Gastrocnemius medialis (tissue), 4 donors: ENCODE measurements at regions of chr10 and their contacts with region 1.

Region 1: DNA sequence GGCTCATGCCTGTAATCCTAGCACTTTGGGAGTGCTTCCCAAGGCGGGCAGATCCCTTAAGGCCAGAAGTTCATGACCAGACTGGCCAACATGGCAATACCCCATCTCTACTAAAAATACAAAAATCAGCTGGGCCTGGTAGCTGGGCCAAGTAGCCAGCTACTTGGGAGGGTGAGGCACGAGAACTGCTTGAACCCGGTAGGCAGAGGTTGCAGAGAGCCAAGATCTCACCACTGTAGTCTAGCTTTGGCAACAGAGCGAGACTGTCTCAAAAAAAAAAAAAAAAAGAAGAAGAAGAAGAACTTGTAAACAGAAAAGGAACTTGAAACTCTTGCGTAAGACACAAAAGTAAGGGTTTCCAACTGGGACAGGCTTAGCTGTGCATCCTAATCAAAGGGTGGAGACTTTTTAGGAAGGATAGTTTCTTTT is 5.6 kb upstream of the IFIT2 start:
- DNase-seq: peak; percentile 85 to 91
- ATAC-seq: peak; percentile 90 to 93
- H3K4me3 ChIP-seq: peak overlapping the region in 1 of 4 donors; percentile 6
- H3K27ac ChIP-seq: peak overlapping the region; percentile 83 to 92 (median 87)
- H3K4me1 ChIP-seq: peaks cover 28 to 35% of the 10 kb centered on the region in 2 donors
- H3K27me3 ChIP-seq: no peaks in the 10 kb centered on the region
- CTCF ChIP-seq: no peak
- POLR2A ChIP-seq: no peak

Region 2: DNA sequence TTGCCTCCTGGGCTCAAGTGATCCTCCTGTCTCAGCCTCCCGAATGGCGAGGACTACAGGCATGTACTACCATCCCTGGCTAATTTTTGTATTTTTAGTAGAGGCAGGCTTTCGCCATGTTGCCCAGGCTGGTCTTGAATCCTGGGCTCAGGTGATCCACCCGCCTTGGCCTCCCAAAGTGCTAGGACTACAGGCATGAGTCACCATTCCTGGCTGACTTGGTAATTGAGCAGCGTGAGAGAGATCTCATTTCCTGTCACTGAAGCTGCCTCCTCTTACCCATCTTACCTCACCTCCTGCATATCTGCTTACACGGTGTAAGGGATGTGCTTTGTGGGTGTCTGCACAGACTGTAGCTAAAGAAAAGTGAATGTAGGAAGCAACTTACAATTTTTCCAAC is 41.2 kb after region 1 on chr10:
- in situ Hi-C with region 1: no loop called
- intact Hi-C with region 1: loop called (anchors 5 kb)
- DNase-seq: peak; percentile 35 to 67
- ATAC-seq: peak; percentile 96
- H3K4me3 ChIP-seq: no peak overlapping the region
- H3K27ac ChIP-seq: peak overlapping the region in 3 of 4 donors; percentile 2 to 45 (median 28)
- H3K4me1 ChIP-seq: peaks cover 16 to 25% of the 10 kb centered on the region in 2 donors
- H3K27me3 ChIP-seq: no peaks in the 10 kb centered on the region
- CTCF ChIP-seq: no peak
- POLR2A ChIP-seq: no peak

Region 3: GRCh38 chr10:89369156-89370105 is 73.2 kb after region 1 on chr10:
- in situ Hi-C with region 1: no loop called
- intact Hi-C with region 1: loop called (anchors 1 kb)
- DNase-seq: no peak
- ATAC-seq: no peak
- H3K4me3 ChIP-seq: no peak overlapping the region
- H3K27ac ChIP-seq: no peak overlapping the region
- H3K4me1 ChIP-seq: peaks cover 11 to 16% of the 10 kb centered on the region in 2 donors
- H3K27me3 ChIP-seq: no peaks in the 10 kb centered on the region
- CTCF ChIP-seq: peak in 4 of 5 experiments; percentile 7 to 46 (median 28)
- POLR2A ChIP-seq: no peak

Region 4: GRCh38 chr10:89391917-89392756 is 95.9 kb after region 1 on chr10 and contains the start of gene IFIT1:
- in situ Hi-C with region 1: loop called in 1 of 4 experiments (anchors 25 kb)
- intact Hi-C with region 1: loop called (anchors 2 kb)
- DNase-seq: peak; percentile 57 to 65
- ATAC-seq: peak; percentile 93 to 97
- H3K4me3 ChIP-seq: peak within 1 kb of the TSS; percentile 58 to 70 (median 58)
- H3K27ac ChIP-seq: peak within 1 kb of the TSS; percentile 72 to 86 (median 84)
- H3K4me1 ChIP-seq: peaks cover 40 to 43% of the 10 kb centered on the region in 2 donors
- H3K27me3 ChIP-seq: no peaks in the 10 kb centered on the region
- CTCF ChIP-seq: no peak
- POLR2A ChIP-seq: peak in 1 of 2 donors; percentile 56
- total RNA-seq, gene IFIT1: 1.8 to 8.9 (median 3.0) TPM

Region 5: DNA sequence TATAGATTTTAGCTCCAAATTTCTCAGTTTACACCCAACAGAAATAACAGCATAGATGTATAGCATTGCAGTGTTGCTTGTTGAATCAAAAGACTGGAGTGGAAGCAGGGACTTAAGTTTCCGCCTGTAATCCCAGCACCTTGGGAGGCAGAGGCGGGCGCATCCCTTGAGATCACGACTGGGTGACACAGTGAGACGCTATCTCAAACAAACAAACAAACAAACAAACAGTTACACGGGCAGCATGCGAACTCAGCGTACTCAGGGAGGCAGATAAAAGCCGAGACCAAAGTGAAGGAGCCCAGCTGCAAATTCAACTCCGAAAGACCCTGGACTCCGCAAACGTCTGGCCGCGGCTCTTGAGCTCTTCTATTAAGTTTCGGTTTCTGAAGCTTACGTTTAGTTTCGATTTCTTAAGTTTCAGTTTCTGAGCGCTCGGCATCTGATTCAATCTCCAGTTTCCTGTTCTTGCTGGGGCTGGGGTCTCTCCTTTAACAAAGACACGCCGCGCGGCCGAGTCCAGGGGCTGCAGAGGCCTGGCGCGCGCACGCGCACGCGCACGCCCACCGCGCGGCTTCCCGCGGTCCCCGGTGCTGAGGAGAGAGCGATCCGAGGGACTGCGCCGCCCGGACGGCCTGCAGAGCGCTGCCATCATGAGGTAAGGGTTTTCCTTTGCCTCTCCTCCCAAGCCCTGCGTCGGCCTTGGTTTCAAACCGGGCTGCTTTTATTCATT is 118.1 kb after region 1 on chr10 and contains the start of gene IFIT5:
- in situ Hi-C with region 1: no loop called
- intact Hi-C with region 1: loop called (anchors 5 kb)
- DNase-seq: peak; percentile 46 to 57
- ATAC-seq: peak; percentile 87 to 91
- H3K4me3 ChIP-seq: peak within 1 kb of the TSS; percentile 76 to 85 (median 80)
- H3K27ac ChIP-seq: peak within 1 kb of the TSS; percentile 78 to 88 (median 83)
- H3K4me1 ChIP-seq: peaks cover 5 to 17% of the 10 kb centered on the region in 2 donors
- H3K27me3 ChIP-seq: no peaks in the 10 kb centered on the region
- CTCF ChIP-seq: no peak
- POLR2A ChIP-seq: peak; percentile 35 to 55
- total RNA-seq, gene IFIT5: 2.4 to 5.5 (median 3.3) TPM

Region 6: GRCh38 chr10:89643431-89644331 is 347.4 kb after region 1 on chr10:
- in situ Hi-C with region 1: no loop called
- intact Hi-C with region 1: loop called (anchors 5 kb)
- DNase-seq: peak; percentile 89 to 91
- ATAC-seq: peak; percentile 77 to 78
- H3K4me3 ChIP-seq: peak overlapping the region; percentile 69 to 92 (median 80)
- H3K27ac ChIP-seq: peak overlapping the region; percentile 93 to 98 (median 96)
- H3K4me1 ChIP-seq: peaks cover 43 to 57% of the 10 kb centered on the region in 2 donors
- H3K27me3 ChIP-seq: no peaks in the 10 kb centered on the region
- CTCF ChIP-seq: no peak
- POLR2A ChIP-seq: peak; percentile 97 to 99